ENCODE measurements at regions of chr7 and their contacts with region 1.

Region 1: DNA sequence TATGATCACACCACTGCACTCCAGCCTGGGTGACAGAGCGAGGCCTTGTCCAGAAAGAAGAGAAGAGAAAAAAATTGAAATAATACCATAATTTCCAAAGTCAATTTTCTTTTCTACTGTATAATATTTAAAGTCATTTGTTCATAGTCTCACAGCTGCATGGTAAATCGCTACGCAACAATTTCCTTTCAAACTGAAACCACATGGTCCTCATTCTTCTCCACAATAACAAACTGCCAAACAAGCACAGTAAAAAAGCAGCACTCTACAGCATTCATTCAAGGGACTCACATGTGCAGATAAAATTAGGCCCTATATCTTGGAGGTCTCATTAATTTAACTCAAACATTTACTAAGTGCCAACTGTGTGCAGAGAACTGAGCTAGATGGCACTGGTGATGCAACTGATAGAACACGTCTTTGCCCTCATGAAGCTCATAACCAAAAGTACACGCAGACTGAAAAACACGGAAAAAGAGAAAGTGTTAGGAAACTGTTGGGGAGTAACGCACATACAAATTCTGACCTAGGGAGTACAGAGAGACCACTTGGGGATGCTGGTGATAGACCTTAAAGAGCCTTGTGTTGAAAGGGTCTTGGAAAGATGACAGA is 68.4 kb upstream of the SRRM3 start:
- DNase-seq: no peak
- ATAC-seq: no peak
- H3K4me3 ChIP-seq: no peak overlapping the region
- H3K27ac ChIP-seq: no peak overlapping the region
- H3K4me1 ChIP-seq: no peaks in the 10 kb centered on the region
- H3K27me3 ChIP-seq: peaks cover 24% of the 10 kb centered on the region
- CTCF ChIP-seq: no peak
- POLR2A ChIP-seq: no peak
- RAD21 ChIP-seq: no peak

Region 2: DNA sequence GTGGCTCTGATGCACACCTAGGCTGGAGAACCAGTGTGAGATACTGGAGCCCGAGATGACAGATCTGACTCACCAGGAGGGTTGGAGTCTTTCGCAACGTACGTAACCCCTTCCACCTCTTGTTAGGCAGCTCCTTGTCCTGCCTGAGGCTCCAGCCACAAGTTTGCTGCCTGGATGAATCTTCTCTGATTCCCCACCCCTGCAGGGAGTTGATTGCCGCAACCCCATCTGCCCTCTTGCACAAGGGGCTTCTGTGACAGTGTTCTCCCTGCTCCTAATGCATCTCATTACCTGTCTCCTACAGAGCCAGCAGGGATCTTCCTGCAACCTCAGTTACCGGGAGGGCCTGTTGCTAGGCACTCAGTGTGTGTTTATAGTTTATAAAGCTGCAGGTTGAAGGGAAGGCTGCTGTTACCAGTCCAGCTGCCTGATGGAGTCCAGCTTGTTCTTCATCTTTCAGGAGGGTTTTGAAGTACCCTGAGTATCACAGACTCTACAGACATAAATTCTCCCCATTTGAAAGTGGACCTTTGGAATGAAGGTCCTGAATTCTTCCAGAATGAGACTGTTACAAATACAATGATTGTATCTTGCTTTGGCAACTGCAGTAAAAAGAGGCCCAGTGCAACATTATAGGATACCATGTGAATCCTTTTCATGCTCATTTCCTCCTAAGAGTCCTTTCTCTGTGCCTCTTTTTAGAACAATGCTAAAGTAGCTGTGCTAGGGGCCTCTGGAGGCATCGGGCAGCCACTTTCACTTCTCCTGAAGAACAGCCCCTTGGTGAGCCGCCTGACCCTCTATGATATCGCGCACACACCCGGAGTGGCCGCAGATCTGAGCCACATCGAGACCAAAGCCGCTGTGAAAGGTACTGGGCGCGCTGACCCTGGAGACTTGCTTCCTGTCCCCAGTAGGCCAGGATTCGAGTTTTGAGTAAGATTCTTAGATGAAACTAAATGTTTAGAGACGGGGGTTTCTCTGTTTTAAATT is 78.8 kb before region 1 on chr7:
- CTCF ChIA-PET with region 1: no interaction called
- POLR2A ChIA-PET with region 1: no interaction called
- dilution Hi-C with region 1: no loop called
- in situ Hi-C with region 1: no loop called
- intact Hi-C with region 1: loop called (anchors 5 kb)
- DNase-seq: peak; percentile 77
- ATAC-seq: peak; percentile 59
- H3K4me3 ChIP-seq: no peak overlapping the region
- H3K27ac ChIP-seq: peak overlapping the region; percentile 70; the same call in 1 of the 2 replicates
- H3K4me1 ChIP-seq: peaks cover 14% of the 10 kb centered on the region
- H3K27me3 ChIP-seq: no peaks in the 10 kb centered on the region
- CTCF ChIP-seq: no peak
- POLR2A ChIP-seq: no peak
- RAD21 ChIP-seq: no peak

Region 3: DNA sequence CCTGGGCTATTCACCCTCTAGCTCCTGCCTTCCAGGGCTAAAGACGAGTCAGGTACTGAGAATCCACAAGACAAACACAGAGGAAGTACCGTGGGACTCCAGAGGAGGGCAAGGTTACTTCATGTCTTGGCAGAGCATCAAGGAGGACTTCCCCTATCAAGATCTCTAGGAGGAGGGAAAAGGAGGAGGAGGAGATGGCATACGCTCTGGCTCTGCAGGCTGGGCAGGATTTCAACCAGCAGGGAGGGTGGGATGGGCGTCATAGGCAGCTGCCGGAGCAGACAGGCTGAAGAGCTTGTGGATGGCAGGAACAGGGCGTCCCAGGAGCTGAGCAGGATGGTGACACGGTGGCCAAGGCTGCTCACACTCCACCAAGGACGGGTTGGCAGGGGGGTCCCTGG is 64.0 kb before region 1 on chr7:
- CTCF ChIA-PET with region 1: no interaction called
- POLR2A ChIA-PET with region 1: no interaction called
- dilution Hi-C with region 1: no loop called
- in situ Hi-C with region 1: loop called (anchors 5 kb)
- intact Hi-C with region 1: loop called (anchors 1 kb)
- DNase-seq: peak; percentile 97
- ATAC-seq: peak; percentile 84
- H3K4me3 ChIP-seq: no peak overlapping the region
- H3K27ac ChIP-seq: no peak overlapping the region
- H3K4me1 ChIP-seq: peaks cover 6% of the 10 kb centered on the region
- H3K27me3 ChIP-seq: no peaks in the 10 kb centered on the region
- CTCF ChIP-seq: peak; percentile 62
- POLR2A ChIP-seq: no peak
- RAD21 ChIP-seq: peak; percentile 74

Region 4: DNA sequence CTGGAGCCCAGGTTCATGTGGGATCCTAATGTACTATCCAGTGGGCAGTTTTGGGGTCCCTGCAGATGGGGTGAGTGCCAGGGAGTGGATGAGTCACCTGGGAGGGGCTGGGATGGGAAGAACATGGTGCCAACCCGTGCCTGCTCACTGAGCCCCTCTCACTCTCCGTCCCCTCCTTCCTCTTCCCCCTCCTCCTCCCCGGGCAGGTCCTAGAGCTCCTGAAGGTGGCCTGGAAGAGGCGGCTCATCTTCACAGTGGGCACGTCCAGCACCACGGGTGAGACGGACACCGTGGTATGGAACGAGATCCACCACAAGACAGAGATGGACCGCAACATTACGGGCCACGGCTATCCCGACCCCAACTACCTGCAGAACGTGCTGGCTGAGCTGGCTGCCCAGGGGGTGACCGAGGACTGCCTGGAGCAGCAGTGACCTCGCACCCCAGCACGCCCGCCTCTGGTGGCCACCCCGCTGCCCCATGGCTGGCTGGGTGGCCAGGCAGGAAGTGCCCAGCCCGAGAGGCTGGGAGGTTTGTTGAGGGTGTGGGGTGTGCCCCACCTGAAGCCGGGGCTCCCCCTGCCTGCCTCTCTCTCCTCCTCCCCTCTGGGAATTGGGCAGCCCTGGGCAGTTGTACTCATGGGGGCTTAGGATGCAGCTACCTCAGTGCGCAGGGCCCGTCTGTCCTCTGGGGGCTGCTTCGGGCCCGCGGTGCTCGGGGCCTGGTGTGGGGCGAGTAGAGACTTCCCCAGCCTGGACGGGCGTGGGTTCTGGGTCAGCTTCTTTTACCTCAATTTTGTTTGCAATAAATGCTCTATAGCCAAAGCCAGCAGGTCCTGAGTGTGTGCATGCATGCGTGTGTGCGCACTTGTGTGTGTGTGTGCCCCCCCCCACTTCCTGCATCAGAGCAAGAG is 372.2 kb after region 1 on chr7:
- CTCF ChIA-PET with region 1: no interaction called
- POLR2A ChIA-PET with region 1: no interaction called
- dilution Hi-C with region 1: no loop called
- in situ Hi-C with region 1: no loop called
- intact Hi-C with region 1: no loop called
- DNase-seq: no peak
- ATAC-seq: no peak
- H3K4me3 ChIP-seq: no peak overlapping the region
- H3K27ac ChIP-seq: no peak overlapping the region
- H3K4me1 ChIP-seq: no peaks in the 10 kb centered on the region
- H3K27me3 ChIP-seq: no peaks in the 10 kb centered on the region
- CTCF ChIP-seq: no peak
- POLR2A ChIP-seq: no peak
- RAD21 ChIP-seq: no peak